IMR-90 (cell line): ENCODE measurements at regions of chr2 and their contacts with region 1.

Region 1: DNA sequence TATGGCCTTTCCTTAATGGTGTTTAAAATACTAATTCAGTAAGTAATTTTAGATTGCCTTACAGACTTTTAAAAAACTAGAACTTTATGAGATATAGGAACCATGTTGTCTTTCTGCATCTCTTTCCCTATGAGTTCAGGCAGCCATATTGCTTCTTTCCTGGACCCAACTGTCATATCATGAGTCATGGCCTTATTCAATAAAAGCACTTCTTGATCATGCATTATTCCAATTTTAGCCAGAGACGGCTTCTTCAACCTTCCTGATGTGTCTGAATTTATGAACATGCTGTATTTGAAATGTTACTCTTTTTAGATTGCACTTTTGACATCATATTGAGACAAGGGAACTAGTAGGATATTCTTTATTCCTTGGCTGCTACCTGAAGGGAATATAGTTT is 65.4 kb upstream of the MAP3K20 start:
- DNase-seq: no peak
- ATAC-seq: no peak
- H3K4me3 ChIP-seq: no peak overlapping the region
- H3K27ac ChIP-seq: no peak overlapping the region
- H3K4me1 ChIP-seq: peaks cover 3% of the 10 kb centered on the region; the same call in 1 of the 2 replicates
- H3K27me3 ChIP-seq: no peaks in the 10 kb centered on the region
- CTCF ChIP-seq: no peak
- POLR2A ChIP-seq: no peak
- RAD21 ChIP-seq: no peak

Region 2: GRCh38 chr2:172985139-172985901 is 24.9 kb before region 1 on chr2:
- CTCF ChIA-PET with region 1: no interaction called
- POLR2A ChIA-PET with region 1: no interaction called
- dilution Hi-C with region 1: no loop called
- in situ Hi-C with region 1: no loop called
- intact Hi-C with region 1: loop called (anchors 2 kb)
- DNase-seq: peak; percentile 63
- ATAC-seq: peak; percentile 87
- H3K4me3 ChIP-seq: no peak overlapping the region
- H3K27ac ChIP-seq: no peak overlapping the region
- H3K4me1 ChIP-seq: peaks cover 5% of the 10 kb centered on the region
- H3K27me3 ChIP-seq: no peaks in the 10 kb centered on the region
- CTCF ChIP-seq: no peak
- POLR2A ChIP-seq: no peak
- RAD21 ChIP-seq: no peak